IMR-90 (cell line): ENCODE measurements at regions of chr6 and their contacts with region 1.

Region 1: GRCh38 chr6:10837995-10838793 is at the start of gene MAK:
- DNase-seq: peak; percentile 67
- ATAC-seq: peak; percentile 99
- H3K4me3 ChIP-seq: peak within 1 kb of the TSS; percentile 65
- H3K27ac ChIP-seq: no peak within 1 kb of the TSS
- H3K4me1 ChIP-seq: peaks cover 3% of the 10 kb centered on the region; the same call in 1 of the 2 replicates
- H3K27me3 ChIP-seq: peaks cover 30% of the 10 kb centered on the region
- CTCF ChIP-seq: no peak
- POLR2A ChIP-seq: no peak
- RAD21 ChIP-seq: no peak
- total RNA-seq, gene MAK: under 0.01 TPM in 1 of 2 replicates, not detected in the other

Region 2: DNA sequence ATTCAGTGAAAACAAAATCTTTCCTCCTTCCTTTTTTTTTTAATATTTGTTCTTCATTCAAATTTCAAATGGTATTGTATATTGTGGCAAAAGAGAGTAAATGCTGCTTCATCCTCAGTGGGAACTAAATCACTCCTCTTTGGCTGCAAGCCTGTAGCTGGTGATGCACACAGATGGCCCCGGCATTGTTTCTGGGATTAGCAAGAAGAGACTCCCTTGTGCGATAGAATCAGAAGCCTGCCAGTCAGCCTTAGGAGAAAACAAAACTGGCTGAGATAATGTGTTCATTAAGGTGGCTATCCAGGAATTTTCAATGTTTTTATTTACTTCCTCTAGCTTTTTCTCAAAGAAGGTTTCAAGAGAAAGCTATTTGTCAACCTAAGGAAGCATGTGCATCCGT is 226.6 kb after region 1 on chr6:
- CTCF ChIA-PET with region 1: no interaction called
- POLR2A ChIA-PET with region 1: no interaction called
- dilution Hi-C with region 1: no loop called
- in situ Hi-C with region 1: no loop called
- intact Hi-C with region 1: loop called (anchors 5 kb)
- DNase-seq: no peak
- ATAC-seq: no peak
- H3K4me3 ChIP-seq: no peak overlapping the region
- H3K27ac ChIP-seq: no peak overlapping the region
- H3K4me1 ChIP-seq: no peaks in the 10 kb centered on the region
- H3K27me3 ChIP-seq: peaks cover 9% of the 10 kb centered on the region
- CTCF ChIP-seq: no peak
- POLR2A ChIP-seq: no peak
- RAD21 ChIP-seq: no peak

Region 3: DNA sequence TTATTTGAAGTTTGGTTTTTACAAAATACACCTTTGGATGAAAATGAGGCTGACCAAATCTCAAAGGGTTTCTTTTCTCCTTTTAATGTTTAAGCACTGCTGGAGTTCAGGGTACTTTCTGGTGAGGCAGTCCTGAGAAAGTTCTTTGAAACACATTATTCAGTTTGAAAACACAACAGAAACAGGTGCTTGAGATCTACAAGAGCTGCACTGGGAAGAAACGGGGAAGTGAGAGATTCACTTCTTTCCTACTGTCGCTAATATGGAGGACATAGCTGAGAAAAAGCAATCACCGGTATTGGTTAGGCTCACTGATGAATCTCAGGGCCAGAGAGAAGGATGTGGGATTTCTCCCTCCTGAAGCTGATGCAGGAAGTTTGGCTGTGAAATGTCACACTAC is 676.5 kb after region 1 on chr6:
- CTCF ChIA-PET with region 1: no interaction called
- POLR2A ChIA-PET with region 1: no interaction called
- dilution Hi-C with region 1: no loop called
- in situ Hi-C with region 1: loop called (anchors 25 kb)
- intact Hi-C with region 1: no loop called
- DNase-seq: no peak
- ATAC-seq: no peak
- H3K4me3 ChIP-seq: no peak overlapping the region
- H3K27ac ChIP-seq: no peak overlapping the region
- H3K4me1 ChIP-seq: no peaks in the 10 kb centered on the region
- H3K27me3 ChIP-seq: peaks cover 12% of the 10 kb centered on the region
- CTCF ChIP-seq: no peak
- POLR2A ChIP-seq: no peak
- RAD21 ChIP-seq: no peak

Region 4: GRCh38 chr6:11632795-11633511 is 794.8 kb after region 1 on chr6:
- CTCF ChIA-PET with region 1: no interaction called
- POLR2A ChIA-PET with region 1: no interaction called
- dilution Hi-C with region 1: no loop called
- in situ Hi-C with region 1: no loop called
- intact Hi-C with region 1: no loop called
- DNase-seq: peak; percentile 90
- ATAC-seq: peak; percentile 93
- H3K4me3 ChIP-seq: no peak overlapping the region
- H3K27ac ChIP-seq: peak overlapping the region; percentile 60
- H3K4me1 ChIP-seq: peaks cover 12% of the 10 kb centered on the region
- H3K27me3 ChIP-seq: no peaks in the 10 kb centered on the region
- CTCF ChIP-seq: no peak
- POLR2A ChIP-seq: no peak
- RAD21 ChIP-seq: no peak